CD8-positive, alpha-beta T cell (primary cell): ENCODE measurements at regions of chr11 and their contacts with region 1.

Region 1: DNA sequence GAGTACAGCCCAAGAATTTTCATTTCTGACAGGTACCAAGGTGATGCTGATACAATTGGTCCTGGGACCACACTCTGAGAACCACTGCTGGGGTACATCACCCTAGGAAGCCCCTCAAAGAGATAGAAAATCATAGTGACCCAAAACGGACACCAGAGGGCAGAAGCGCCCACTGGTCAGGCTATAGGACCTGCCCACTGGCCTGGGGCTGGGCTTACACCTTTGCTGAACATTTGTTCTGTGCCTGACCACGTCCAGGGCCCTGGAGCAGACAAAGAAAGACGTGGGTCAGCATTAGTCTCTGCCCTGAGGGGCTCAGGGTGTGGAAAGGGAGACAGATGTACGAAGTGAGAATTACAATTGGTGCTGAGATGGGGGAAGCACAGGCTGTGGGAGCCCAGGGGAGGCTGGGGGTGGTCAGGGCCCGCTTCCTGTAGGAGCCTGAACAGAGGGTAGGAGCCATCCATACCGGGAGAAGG is 14.4 kb upstream of the SERPINH1 start:
- DNase-seq: peak in 5 of 9 experiments; percentile 28 to 63 (median 56)
- ATAC-seq: peak; percentile 54
- H3K4me3 ChIP-seq: no peak overlapping the region
- H3K4me3 Mint-ChIP-seq: no peak overlapping the region
- H3K27ac ChIP-seq: no peak overlapping the region
- H3K27ac Mint-ChIP-seq: no peak overlapping the region
- H3K4me1 ChIP-seq: no peaks in the 10 kb centered on the region
- H3K4me1 Mint-ChIP-seq: peaks cover 2% of the 10 kb centered on the region
- H3K27me3 ChIP-seq: peaks cover 0 to 3% of the 10 kb centered on the region in 2 experiments
- H3K27me3 Mint-ChIP-seq: peaks cover 4% of the 10 kb centered on the region
- CTCF ChIP-seq: peak; percentile 80

Region 2: GRCh38 chr11:75342903-75343870 is 204.4 kb before region 1 on chr11:
- CTCF ChIA-PET with region 1: no interaction called
- POLR2A ChIA-PET with region 1: no interaction called
- intact Hi-C with region 1: no loop called
- DNase-seq: no peak
- ATAC-seq: no peak
- H3K4me3 ChIP-seq: no peak overlapping the region
- H3K4me3 Mint-ChIP-seq: no peak overlapping the region
- H3K27ac ChIP-seq: peak overlapping the region in 1 of 2 experiments; percentile 12
- H3K27ac Mint-ChIP-seq: peak overlapping the region; percentile 85
- H3K4me1 ChIP-seq: peaks cover 98% of the 10 kb centered on the region
- H3K4me1 Mint-ChIP-seq: peaks cover 97% of the 10 kb centered on the region
- H3K27me3 ChIP-seq: no peaks in the 10 kb centered on the region
- H3K27me3 Mint-ChIP-seq: no peaks in the 10 kb centered on the region
- CTCF ChIP-seq: no peak

Region 3: GRCh38 chr11:75577207-75577606 is 29.6 kb after region 1 on chr11:
- CTCF ChIA-PET with region 1: interaction called, 14 read pairs
- POLR2A ChIA-PET with region 1: no interaction called
- intact Hi-C with region 1: loop called (anchors 1 to 2 kb)
- DNase-seq: peak; percentile 33 to 74 (median 67)
- ATAC-seq: peak; percentile 77
- H3K4me3 ChIP-seq: no peak overlapping the region
- H3K4me3 Mint-ChIP-seq: no peak overlapping the region
- H3K27ac ChIP-seq: no peak overlapping the region
- H3K27ac Mint-ChIP-seq: no peak overlapping the region
- H3K4me1 ChIP-seq: peaks cover 6% of the 10 kb centered on the region
- H3K4me1 Mint-ChIP-seq: peaks cover 7% of the 10 kb centered on the region
- H3K27me3 ChIP-seq: no peaks in the 10 kb centered on the region
- H3K27me3 Mint-ChIP-seq: no peaks in the 10 kb centered on the region
- CTCF ChIP-seq: peak; percentile 65